ENCODE measurements at regions of chr10 and their contacts with region 1.

Region 1: DNA sequence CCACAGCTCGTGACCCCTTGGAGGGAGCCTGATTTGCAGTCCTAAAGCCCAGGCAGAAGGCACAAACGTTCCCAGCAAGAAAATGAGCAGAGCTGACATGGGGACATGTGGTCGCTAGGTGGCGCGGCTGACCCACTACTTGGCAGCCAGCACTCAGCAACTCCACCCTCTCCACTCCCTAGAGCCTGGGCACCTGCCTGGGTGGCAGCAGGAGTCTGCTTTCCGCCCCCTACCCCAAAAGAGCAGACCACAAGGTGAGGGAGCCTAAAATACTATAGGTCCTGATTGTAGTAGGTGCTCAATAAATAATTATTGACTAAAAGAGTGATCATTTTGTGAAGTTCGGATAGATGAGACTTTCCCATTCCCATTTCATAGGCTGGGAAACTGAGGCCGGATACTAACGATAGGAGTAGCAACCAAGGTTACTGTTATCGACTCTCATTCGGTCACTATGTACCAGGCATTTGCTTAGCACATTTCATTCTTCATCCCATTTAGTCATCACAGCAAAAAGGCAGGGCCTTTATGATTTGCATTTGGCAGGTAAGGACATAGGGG is 57.4 kb downstream of the NEUROG3 start:
- DNase-seq: peak; percentile 39 to 60 (median 51)
- H3K4me3 ChIP-seq: no peak overlapping the region
- H3K4me3 Mint-ChIP-seq: no peak overlapping the region
- H3K27ac ChIP-seq: no peak overlapping the region
- H3K27ac Mint-ChIP-seq: no peak overlapping the region
- H3K4me1 ChIP-seq: no peaks in the 10 kb centered on the region
- H3K4me1 Mint-ChIP-seq: no peaks in the 10 kb centered on the region
- H3K27me3 ChIP-seq: peaks cover 0 to 2% of the 10 kb centered on the region in 2 donors
- H3K27me3 Mint-ChIP-seq: peaks cover 10 to 28% (median 15%) of the 10 kb centered on the region in 3 donors
- CTCF ChIP-seq: peak; percentile 95

Region 2: DNA sequence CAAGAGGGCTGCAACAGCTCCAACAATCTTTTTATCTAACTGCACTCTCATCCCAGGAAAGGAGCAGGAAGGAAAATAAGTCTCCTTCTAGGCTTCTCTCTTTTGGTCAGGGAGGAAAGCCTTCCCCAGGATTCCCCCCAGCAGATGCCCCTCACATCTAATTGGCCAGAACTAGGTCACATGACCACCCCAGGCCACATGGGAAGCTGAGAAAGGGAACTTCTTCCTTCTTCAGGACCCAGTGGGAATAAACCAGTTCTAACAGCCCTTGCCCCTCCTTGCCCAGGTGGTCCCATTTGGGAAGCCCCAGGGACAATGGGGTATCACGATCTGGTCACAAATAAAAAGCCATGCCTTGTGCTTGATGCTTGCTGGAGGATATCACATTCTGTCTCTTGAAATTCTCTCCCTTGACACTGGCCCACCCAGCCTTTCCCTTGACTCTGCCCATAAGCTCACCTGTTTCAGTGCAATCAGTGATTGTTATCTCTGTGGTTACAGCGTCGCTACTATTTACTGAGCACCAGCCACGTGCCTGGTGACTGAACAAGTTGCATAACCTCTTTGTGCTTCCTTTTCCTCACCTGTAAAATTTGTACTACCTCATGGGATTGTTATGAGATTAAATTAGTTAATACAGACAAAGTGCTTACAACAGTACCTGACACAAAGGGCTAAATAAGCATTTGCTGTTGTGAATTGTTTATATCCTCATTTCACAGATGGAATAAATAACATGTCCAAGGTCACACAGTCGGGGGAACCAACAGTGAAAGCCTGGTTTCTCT is 90.1 kb before region 1 on chr10:
- intact Hi-C with region 1: no loop called
- DNase-seq: peak in 1 of 3 donors; percentile 31
- H3K4me3 ChIP-seq: no peak overlapping the region
- H3K4me3 Mint-ChIP-seq: no peak overlapping the region
- H3K27ac ChIP-seq: no peak overlapping the region
- H3K27ac Mint-ChIP-seq: no peak overlapping the region
- H3K4me1 ChIP-seq: peaks cover 6 to 10% of the 10 kb centered on the region in 2 donors
- H3K4me1 Mint-ChIP-seq: peaks cover 17% of the 10 kb centered on the region
- H3K27me3 ChIP-seq: no peaks in the 10 kb centered on the region
- H3K27me3 Mint-ChIP-seq: peaks cover 3 to 11% (median 5%) of the 10 kb centered on the region in 3 donors
- CTCF ChIP-seq: no peak

Region 3: DNA sequence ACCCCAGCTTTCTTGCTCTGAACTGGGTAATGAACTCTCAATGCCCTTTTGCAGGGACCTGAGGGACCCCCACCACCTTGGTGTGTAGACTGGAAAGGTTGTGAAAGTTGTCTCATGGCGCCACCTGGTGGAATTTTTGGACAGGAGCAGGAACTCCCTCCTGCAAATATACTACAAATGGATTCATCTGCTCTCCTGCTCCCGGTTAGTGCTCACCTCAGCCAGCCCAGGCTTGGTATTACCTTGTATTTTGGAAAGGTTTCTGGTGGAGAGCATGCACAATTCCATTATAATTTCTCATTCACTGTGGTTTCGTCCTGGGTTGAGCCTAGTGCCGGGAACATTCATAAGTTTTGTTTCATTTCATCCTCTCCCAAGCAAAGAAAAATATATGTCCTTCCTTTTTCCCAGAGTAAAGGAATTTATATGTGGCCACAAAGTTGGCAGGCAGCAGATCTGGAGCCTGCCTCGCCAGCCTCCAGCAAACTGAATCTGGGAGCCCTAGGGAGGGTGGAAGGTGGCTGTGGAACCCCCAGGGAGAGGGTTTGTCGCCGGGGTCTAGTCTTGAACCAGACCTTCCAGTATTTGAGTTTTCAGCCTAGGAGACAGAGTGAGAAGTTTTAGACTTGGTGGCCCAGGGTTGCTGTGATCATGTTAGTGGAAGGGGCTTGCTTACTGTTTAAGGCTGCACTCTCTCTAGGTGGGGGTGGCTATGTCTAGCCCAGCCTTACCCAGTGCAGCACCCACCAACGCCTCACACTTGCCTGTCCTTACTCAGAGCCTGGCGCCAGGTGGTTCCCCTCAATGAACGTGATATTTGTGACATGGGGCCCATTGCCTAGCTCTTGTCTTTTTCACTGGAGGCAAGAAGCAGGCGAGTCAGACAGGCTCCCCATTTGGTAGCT is 123.8 kb after region 1 on chr10:
- intact Hi-C with region 1: loop called (anchors 5 kb)
- DNase-seq: peak; percentile 15 to 52 (median 21)
- H3K4me3 ChIP-seq: no peak overlapping the region
- H3K4me3 Mint-ChIP-seq: no peak overlapping the region
- H3K27ac ChIP-seq: no peak overlapping the region
- H3K27ac Mint-ChIP-seq: peak overlapping the region in 1 of 7 donors; percentile 64
- H3K4me1 ChIP-seq: no peaks in the 10 kb centered on the region
- H3K4me1 Mint-ChIP-seq: peaks cover 5% of the 10 kb centered on the region
- H3K27me3 ChIP-seq: no peaks in the 10 kb centered on the region
- H3K27me3 Mint-ChIP-seq: peaks cover 4 to 9% (median 7%) of the 10 kb centered on the region in 3 donors
- CTCF ChIP-seq: peak; percentile 79

Region 4: GRCh38 chr10:69716711-69717560 is 201.2 kb after region 1 on chr10:
- intact Hi-C with region 1: loop called in 1 of 2 experiments (anchors 5 kb)
- DNase-seq: peak in 2 of 3 donors; percentile 2 to 25
- H3K4me3 ChIP-seq: no peak overlapping the region
- H3K4me3 Mint-ChIP-seq: no peak overlapping the region
- H3K27ac ChIP-seq: no peak overlapping the region
- H3K27ac Mint-ChIP-seq: peak overlapping the region in 1 of 7 donors; percentile 38
- H3K4me1 ChIP-seq: no peaks in the 10 kb centered on the region
- H3K4me1 Mint-ChIP-seq: no peaks in the 10 kb centered on the region
- H3K27me3 ChIP-seq: no peaks in the 10 kb centered on the region
- H3K27me3 Mint-ChIP-seq: peaks cover 2 to 7% (median 7%) of the 10 kb centered on the region in 3 donors
- CTCF ChIP-seq: peak; percentile 77

Measured in CD14-positive monocyte (primary cell).